ENCODE measurements at regions of chr2 and their contacts with region 1.

Region 1: GRCh38 chr2:55050133-55050994 is at the start of gene RTN4:
- DNase-seq: peak; percentile 92 to 99 (median 98)
- ATAC-seq: peak; percentile 85 to 90
- H3K4me3 Mint-ChIP-seq: peak within 1 kb of the TSS; percentile 91 to 100 (median 100)
- H3K27ac Mint-ChIP-seq: peak within 1 kb of the TSS; percentile 96 to 100 (median 99)
- H3K4me1 Mint-ChIP-seq: peaks cover 32 to 79% (median 68%) of the 10 kb centered on the region in 4 donors
- H3K27me3 Mint-ChIP-seq: no peaks in the 10 kb centered on the region
- polyA plus RNA-seq, gene RTN4: 68.0 to 77.1 (median 74.2) TPM

Region 2: GRCh38 chr2:55099878-55100820 is 49.8 kb after region 1 on chr2:
- POLR2A ChIA-PET with region 1: no interaction called
- DNase-seq: no peak
- ATAC-seq: no peak
- H3K4me3 Mint-ChIP-seq: no peak overlapping the region
- H3K27ac Mint-ChIP-seq: no peak overlapping the region
- H3K4me1 Mint-ChIP-seq: peaks cover 0 to 6% (median 0%) of the 10 kb centered on the region in 4 donors
- H3K27me3 Mint-ChIP-seq: no peaks in the 10 kb centered on the region

Region 3: DNA sequence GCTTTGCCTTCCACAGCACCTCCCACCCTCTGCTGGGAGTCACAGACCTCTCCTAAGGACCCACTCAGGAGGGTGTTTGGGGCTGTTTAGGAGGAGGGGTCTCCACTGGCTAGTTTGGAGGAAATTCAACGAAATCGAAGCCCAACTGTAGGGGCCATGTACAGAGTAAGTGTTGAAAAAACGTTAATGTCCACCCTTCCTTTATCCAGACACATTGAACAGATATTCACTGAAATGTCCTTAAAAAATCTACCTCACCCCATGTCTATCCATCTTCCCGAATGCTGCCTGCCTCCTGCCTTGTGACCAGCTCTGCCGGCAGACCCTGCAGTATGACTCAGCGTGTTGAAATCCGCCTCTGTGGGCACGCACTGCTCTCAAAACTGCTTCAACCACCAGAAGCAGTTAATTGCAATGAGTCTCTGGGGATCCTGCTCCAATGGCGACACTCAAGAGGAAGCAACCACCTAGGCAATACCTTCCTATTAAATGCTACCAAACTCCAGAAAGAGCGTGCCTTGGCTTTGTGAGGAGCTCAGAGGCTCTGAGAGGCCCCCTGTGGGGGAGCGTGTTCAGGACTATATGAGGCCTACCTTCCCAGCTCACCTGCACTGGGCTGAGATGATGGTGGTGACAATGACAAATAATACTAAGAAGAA is 61.3 kb after region 1 on chr2:
- POLR2A ChIA-PET with region 1: no interaction called
- DNase-seq: no peak
- ATAC-seq: no peak
- H3K4me3 Mint-ChIP-seq: no peak overlapping the region
- H3K27ac Mint-ChIP-seq: peak overlapping the region in 1 of 10 donors; percentile 93
- H3K4me1 Mint-ChIP-seq: peaks cover 0 to 17% (median 2%) of the 10 kb centered on the region in 4 donors
- H3K27me3 Mint-ChIP-seq: peaks cover 0 to 3% (median 0%) of the 10 kb centered on the region in 5 donors

Region 4: DNA sequence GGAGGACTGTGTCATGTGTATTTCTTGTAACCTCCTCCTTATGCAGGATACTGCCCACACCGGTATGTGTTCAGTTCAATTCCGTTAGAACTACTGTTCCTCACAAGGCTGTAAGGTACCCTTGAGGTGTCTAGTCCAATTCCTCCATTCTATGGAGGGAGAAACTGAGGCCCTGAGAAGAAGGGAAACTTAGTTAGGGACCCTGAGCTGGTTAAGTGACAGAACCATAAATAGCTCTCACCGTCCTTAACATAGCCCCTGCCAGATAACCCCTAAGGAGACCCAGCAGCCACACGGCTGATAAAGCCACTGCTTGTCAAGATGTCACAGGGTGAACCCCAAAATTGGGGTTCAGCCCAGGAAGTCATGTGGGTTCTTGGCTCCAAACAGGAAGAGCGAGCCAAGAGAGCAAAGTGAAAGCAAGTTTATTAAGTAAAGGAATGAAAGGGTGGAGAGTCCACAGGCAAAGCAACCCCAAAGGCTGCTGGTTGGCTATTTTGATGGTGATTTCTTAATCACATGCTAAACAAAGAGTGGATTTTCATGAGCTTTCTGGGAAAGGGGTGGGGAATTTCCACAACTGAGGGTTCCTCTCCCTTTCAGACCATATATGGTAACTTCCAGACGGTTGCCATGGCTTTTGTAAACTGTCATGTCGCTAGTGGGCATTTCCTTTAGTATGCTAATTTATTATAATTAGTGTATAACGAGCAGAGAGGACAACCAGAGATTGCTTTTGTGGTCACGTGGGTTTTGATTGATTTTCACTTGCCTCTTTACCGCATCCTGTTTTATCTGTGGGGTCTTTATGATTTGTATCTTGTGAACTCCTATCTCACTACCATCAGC is 83.3 kb after region 1 on chr2:
- POLR2A ChIA-PET with region 1: interaction called, 19 read pairs
- DNase-seq: peak in 9 of 10 donors; percentile 15 to 81 (median 69)
- ATAC-seq: peak; percentile 91 to 92
- H3K4me3 Mint-ChIP-seq: peak overlapping the region; percentile 73 to 94 (median 90)
- H3K27ac Mint-ChIP-seq: peak overlapping the region; percentile 89 to 98 (median 97)
- H3K4me1 Mint-ChIP-seq: peaks cover 20 to 47% (median 40%) of the 10 kb centered on the region in 4 donors
- H3K27me3 Mint-ChIP-seq: no peaks in the 10 kb centered on the region

Region 5: GRCh38 chr2:55223958-55224760 is 173.8 kb after region 1 on chr2:
- POLR2A ChIA-PET with region 1: interaction called, 22 read pairs
- DNase-seq: peak in 3 of 10 donors; percentile 9 to 64 (median 17)
- ATAC-seq: no peak
- H3K4me3 Mint-ChIP-seq: peak overlapping the region; percentile 71 to 91 (median 81)
- H3K27ac Mint-ChIP-seq: peak overlapping the region; percentile 84 to 97 (median 92)
- H3K4me1 Mint-ChIP-seq: peaks cover 25 to 46% (median 40%) of the 10 kb centered on the region in 4 donors
- H3K27me3 Mint-ChIP-seq: no peaks in the 10 kb centered on the region

Measured in naive thymus-derived CD8-positive, alpha-beta T cell (primary cell).